ENCODE measurements at regions of chr2 and their contacts with region 1.

Region 1: GRCh38 chr2:228681426-228681825 is 499.9 kb upstream of the SPHKAP start:
- ATAC-seq: peak in 5 of 8 experiments; percentile 46 to 77 (median 66)
- H3K4me3 ChIP-seq: no peak overlapping the region
- H3K27ac ChIP-seq: no peak overlapping the region
- H3K4me1 ChIP-seq: no peaks in the 10 kb centered on the region

Region 2: GRCh38 chr2:229118927-229119326 is 437.5 kb after region 1 on chr2:
- in situ Hi-C with region 1: loop called in 1 of 9 experiments (anchors 25 kb)
- ATAC-seq: no peak
- H3K4me3 ChIP-seq: no peak overlapping the region
- H3K27ac ChIP-seq: no peak overlapping the region
- H3K4me1 ChIP-seq: no peaks in the 10 kb centered on the region

Region 3: DNA sequence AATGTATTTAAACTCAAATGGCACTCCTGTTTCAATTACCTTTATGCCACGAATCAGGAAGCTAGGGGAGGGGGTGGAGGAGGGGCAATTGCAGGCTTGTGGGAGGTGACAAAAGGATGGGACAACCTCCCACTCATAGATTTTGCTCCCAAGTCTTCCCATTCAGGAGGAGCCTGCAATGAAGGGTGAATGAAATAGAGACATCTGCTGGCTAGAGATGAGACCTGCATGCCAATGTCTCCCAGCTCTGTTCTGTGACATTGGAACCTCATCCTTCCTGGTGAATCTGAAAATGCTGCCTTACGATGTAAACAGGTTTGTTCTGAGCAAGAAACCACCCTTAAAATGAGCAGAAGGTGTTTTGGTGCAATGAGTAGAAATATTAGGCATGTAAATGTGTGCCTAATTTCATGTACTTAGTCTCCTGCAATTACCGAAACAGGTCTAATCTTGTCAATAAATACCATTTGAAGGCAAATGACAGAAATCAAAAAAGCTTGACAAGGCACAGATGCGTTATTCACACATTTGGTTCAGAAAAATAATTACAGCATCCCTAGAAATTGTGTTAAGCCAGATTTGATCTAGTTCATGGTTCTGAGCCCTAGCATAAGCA is 592.4 kb after region 1 on chr2:
- in situ Hi-C with region 1: loop called in 2 of 9 experiments (anchors 25 kb)
- ATAC-seq: peak; percentile 77 to 90 (median 81)
- H3K4me3 ChIP-seq: peak overlapping the region in 3 of 5 donors; percentile 11 to 19 (median 19)
- H3K27ac ChIP-seq: no peak overlapping the region
- H3K4me1 ChIP-seq: peaks cover 3 to 16% of the 10 kb centered on the region in 2 donors

Region 4: GRCh38 chr2:229282758-229283546 is 601.5 kb after region 1 on chr2:
- in situ Hi-C with region 1: loop called in 1 of 9 experiments (anchors 25 kb)
- ATAC-seq: peak in 2 of 8 experiments; percentile 99 to 100
- H3K4me3 ChIP-seq: no peak overlapping the region
- H3K27ac ChIP-seq: no peak overlapping the region
- H3K4me1 ChIP-seq: peaks cover 4 to 11% of the 10 kb centered on the region in 2 donors

Region 5: DNA sequence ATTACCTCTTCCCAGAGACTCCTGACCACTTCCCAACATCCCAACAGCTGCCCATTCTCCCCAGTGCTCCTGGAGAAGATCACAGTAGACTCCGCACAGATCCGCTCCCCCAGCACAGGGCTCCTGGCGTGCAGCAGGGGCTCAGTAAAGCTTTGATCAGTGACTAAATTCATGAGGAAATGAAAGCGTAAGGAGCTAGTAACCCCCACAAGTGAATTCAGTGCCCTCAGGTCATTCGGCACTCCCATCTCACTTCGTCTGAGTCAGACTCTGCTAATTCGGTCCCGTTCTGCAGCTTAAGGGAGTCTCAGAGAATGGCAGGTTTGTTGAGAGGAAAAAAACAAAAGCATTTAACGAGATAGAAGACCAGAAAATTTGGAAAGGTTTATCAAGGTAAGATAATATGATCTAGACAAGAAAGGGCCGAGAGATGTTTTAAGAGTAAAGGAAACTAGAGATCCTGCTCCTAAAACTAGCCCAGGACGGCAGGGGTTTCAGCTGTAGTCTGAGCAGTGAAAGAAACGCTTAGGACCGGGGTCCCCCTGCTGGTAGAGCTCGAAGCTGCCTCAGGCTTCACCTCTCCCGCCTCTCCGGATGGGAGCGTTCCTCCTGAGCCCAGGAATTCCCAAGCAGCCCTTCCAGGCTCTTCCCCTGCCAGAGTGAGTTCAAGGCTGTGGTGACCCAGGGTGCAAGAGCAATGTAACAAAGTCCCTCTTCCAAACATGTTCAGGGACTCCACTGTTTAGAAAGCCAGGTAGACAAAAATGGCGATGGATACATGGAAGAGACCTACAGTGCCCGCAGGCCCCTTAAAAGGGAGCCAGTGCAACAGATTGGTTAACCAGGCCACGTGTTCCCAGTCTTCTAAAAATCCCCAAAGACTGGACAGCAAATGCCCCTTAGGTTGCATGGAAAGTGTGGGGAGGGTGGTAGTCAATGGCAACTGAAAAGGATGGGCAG is 905.6 kb after region 1 on chr2:
- in situ Hi-C with region 1: loop called in 1 of 9 experiments (anchors 25 kb)
- ATAC-seq: peak; percentile 92 to 99 (median 96)
- H3K4me3 ChIP-seq: peak overlapping the region in 1 of 5 donors; percentile 7
- H3K27ac ChIP-seq: no peak overlapping the region
- H3K4me1 ChIP-seq: peaks cover 13% of the 10 kb centered on the region in 2 donors

Region 6: GRCh38 chr2:229714736-229715541 is 1033.5 kb after region 1 on chr2:
- in situ Hi-C with region 1: loop called in 2 of 9 experiments (anchors 25 kb)
- ATAC-seq: peak; percentile 29 to 70 (median 62)
- H3K4me3 ChIP-seq: peak overlapping the region; percentile 59 to 94 (median 64)
- H3K27ac ChIP-seq: peak overlapping the region; percentile 39 to 77
- H3K4me1 ChIP-seq: peaks cover 6 to 16% of the 10 kb centered on the region in 2 donors

Measured in motor neuron (in vitro differentiated cells).